Activated CD4-positive, alpha-beta T cell treated with anti-CD3 and anti-CD28 coated beads, Interleukin-2, amount 10 ng/mL, durations not matched to agents 24 days and 14 days (primary cell): ENCODE measurements at regions of chr11 and their contacts with region 1.

Region 1: DNA sequence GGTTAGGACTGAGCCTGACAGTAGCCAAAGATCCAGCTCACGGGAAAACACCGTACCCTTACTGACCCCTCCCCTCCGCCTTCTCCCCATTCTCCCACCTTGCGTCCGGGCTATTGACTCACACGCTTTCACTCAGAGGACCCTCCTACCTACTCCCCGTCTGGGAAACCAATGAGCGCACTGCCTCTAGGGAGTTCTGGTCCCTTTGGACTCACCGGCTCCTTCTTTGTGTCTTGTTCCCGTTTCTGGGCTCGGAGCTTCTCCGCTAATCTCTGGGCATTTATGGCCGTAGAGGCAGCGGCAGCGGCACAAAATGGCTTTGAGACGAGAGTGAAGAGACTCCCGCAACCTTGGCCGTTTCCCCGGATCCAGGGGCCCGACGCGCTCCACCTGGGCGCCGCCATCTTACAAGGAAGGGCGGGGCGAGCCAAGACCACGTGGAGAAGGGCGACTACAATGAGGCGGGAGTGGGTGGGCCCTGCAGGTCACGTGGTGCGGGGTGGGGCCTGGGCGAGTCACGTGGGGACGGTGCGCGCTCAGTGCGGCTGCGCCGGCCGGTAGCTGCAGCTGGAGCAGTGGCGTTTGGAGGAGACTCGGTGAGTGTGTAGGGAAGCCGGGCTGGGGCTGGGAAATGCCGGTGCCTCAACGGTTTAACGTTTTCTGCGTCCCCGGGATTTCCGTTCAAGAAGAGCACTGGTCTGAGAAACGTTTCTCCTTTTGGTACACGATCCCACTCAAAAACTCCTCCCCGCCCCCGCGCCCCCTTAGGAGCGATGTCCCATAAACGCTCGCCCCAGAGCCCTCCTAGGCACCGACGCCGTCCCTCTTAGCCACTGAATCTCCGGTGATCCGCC is at the starts of genes FAM118B and RPUSD4:
- DNase-seq: peak; percentile 100
- H3K4me3 Mint-ChIP-seq: peak within 1 kb of the TSS; percentile 100
- H3K27ac Mint-ChIP-seq: peak within 1 kb of the TSS; percentile 97
- H3K4me1 Mint-ChIP-seq: peaks cover 32% of the 10 kb centered on the region
- H3K27me3 Mint-ChIP-seq: peaks cover 7% of the 10 kb centered on the region
- total RNA-seq, gene FAM118B: 12.8 and 14.2 TPM in 2 replicates
- total RNA-seq, gene RPUSD4: 48.6 and 51.1 TPM in 2 replicates

Region 2: DNA sequence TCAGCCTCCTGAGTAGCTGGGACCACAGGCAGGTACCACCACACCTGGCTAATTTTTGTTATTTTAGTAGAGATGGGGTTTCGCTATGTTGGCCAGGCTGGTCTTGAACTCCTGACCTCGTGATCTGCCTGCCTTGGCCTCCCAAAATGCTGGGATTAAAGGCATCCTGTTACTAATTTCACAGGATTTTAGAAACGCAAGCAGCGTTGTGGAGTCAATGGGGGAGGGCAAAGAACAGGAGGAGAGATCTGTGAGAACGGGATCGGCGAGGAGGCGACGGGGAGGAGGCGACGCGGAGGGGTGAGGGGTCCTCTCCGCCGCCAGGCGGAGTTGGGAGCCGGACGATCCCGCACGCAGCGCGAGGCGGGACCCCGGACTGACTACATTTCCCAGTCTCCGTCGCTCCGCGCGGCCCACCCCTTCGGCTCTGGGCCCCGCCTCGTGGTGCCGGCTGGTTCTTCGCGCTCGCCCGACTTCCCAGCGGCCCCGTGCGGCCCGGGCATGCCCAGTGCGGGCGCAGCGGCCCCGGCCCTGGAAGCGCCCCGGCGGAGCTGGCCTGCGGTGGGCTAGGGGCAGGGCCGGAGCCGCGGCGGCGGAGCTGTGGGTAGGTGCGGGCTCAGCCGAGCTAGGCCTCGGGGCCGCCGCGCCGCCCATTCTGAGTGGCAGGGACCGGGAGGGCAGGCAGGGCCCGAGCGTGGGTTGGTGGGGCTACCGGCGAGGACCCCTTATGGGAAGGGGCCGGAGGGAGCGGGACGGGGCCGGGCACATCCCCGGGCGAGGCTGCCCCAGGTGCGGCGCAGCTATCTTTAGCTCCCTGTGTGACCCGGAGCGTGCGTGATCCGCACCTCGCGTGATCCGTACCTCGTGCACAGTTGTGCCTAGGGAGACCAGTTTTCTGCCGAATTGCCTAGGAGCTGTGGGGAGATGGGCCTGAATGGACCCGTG is 642.2 kb before region 1 on chr11 and contains the start of gene EI24:
- intact Hi-C with region 1: loop called (anchors 5 kb)
- DNase-seq: peak; percentile 97
- H3K4me3 Mint-ChIP-seq: peak within 1 kb of the TSS; percentile 96
- H3K27ac Mint-ChIP-seq: peak within 1 kb of the TSS; percentile 94
- H3K4me1 Mint-ChIP-seq: peaks cover 18% of the 10 kb centered on the region
- H3K27me3 Mint-ChIP-seq: no peaks in the 10 kb centered on the region
- total RNA-seq, gene EI24: 61.7 TPM in 2 replicates

Region 3: GRCh38 chr11:125592305-125593112 is 619.0 kb before region 1 on chr11 and contains the start of gene STT3A:
- intact Hi-C with region 1: loop called (anchors 1 kb)
- DNase-seq: peak; percentile 99
- H3K4me3 Mint-ChIP-seq: peak within 1 kb of the TSS; percentile 98
- H3K27ac Mint-ChIP-seq: peak within 1 kb of the TSS; percentile 95
- H3K4me1 Mint-ChIP-seq: peaks cover 37% of the 10 kb centered on the region
- H3K27me3 Mint-ChIP-seq: no peaks in the 10 kb centered on the region
- total RNA-seq, gene STT3A: 167 and 183 TPM in 2 replicates

Region 4: DNA sequence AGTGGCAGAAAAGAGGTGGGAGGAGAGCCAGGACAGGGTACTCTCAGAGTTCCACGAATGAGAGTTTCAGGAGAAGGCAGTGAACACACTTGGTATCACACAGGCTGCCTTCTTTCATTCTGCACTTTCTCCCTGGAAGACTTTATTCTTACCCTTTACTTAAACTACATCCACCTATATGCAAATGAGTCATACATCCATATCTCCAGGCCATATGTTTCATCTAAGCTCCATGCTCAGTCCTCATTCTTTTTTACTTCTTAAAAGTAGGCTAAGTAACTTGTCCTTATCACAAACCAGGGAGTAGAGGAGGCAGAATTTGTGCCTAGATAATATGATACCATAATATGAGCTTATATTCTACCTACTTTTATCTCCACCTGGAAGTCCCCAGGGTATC is 330.2 kb before region 1 on chr11:
- intact Hi-C with region 1: no loop called
- DNase-seq: no peak
- H3K4me3 Mint-ChIP-seq: no peak overlapping the region
- H3K27ac Mint-ChIP-seq: no peak overlapping the region
- H3K4me1 Mint-ChIP-seq: peaks cover 4% of the 10 kb centered on the region
- H3K27me3 Mint-ChIP-seq: peaks cover 27% of the 10 kb centered on the region

Region 5: DNA sequence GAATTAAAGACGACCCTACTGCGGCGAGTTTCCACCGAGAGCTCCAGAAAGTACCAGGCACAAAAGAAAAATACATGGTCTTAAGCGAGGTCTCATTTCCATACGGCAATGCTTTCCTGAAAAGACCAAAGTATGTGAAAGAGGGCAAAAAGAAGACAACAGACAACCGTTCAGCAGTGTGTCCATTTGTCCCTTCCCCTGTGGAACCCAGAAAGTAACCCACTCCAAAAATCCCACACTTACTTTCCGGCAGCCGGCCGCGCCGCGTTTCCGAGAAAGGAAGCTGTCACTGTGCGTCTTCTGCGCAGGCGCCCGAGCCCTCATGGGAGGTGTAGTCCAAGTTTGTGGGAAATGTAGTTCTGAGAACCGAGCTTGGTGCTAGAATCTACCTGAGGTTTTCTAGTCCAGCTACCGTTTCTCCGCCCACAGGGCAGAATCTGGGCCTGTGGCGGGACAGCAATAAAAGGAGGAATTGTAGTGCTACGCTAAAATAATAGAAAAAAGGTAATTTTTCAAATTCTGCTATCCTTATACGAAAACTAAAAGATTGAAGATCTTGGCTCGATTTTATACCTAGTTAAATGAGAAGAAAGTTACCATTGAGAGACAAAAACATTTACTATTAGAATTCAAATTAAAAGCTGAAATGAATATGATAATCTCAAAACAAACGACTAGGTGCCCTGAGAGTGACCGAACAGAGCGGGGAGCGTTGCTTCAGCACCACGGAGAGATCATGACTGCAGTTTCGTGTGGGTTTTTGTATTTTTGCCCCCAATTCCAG is 308.3 kb before region 1 on chr11 and contains the start of gene PUS3:
- intact Hi-C with region 1: loop called (anchors 1 kb)
- DNase-seq: peak; percentile 97
- H3K4me3 Mint-ChIP-seq: peak within 1 kb of the TSS; percentile 95
- H3K27ac Mint-ChIP-seq: peak within 1 kb of the TSS; percentile 94
- H3K4me1 Mint-ChIP-seq: peaks cover 28% of the 10 kb centered on the region
- H3K27me3 Mint-ChIP-seq: peaks cover 29% of the 10 kb centered on the region
- total RNA-seq, gene PUS3: 18.0 and 19.2 TPM in 2 replicates

Region 6: DNA sequence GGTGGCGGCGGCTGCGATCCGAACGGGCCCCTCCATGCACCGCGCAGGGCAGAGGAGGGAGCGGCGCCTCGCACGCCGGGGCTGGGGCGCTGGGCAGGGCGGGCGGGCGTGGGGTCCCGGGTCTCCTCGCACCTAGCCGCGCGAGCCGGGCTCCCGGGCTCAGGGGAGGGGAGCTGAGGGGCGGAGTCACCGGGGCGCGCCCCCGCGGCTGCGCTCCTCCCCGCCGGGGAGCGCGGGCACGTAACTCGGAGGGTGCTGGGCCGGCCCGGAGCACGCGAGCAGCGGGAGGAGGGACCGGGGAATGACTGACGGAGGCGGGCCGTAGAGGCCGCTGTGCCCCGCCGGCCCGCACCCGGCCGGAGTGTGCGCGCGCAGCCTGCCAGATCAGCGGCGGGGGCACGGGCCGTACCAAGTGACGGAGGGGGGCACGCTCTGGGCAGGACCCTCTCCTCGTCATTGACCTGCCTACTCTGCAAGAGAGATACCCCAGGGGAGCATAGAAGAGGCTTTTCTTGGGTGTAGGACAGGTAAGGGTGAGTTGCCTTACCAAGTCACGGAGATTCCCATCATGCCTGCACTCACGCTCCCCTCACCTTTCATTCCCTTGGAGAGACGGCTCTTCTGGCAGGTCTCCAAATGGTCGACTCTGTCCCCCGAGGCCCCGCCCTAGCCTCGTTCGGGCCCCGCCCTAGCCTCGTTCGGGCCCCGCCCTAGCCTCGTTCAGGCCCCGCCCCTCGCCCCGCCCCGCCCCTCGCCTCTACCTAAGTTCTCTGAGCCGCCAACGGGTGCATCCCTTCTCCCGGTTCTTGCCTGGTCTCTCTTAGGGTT is 148.6 kb before region 1 on chr11 and contains the start of gene CDON:
- intact Hi-C with region 1: loop called (anchors 1 kb)
- DNase-seq: peak; percentile 98
- H3K4me3 Mint-ChIP-seq: peak within 1 kb of the TSS; percentile 80
- H3K27ac Mint-ChIP-seq: peak within 1 kb of the TSS; percentile 97
- H3K4me1 Mint-ChIP-seq: peaks cover 5% of the 10 kb centered on the region
- H3K27me3 Mint-ChIP-seq: peaks cover 46% of the 10 kb centered on the region
- total RNA-seq, gene CDON: 1.9 TPM in 2 replicates

Region 7: GRCh38 chr11:126303623-126304456 is 92.4 kb after region 1 on chr11 and contains the start of gene DCPS:
- intact Hi-C with region 1: loop called (anchors 1 kb)
- DNase-seq: peak; percentile 97
- H3K4me3 Mint-ChIP-seq: peak within 1 kb of the TSS; percentile 91
- H3K27ac Mint-ChIP-seq: peak within 1 kb of the TSS; percentile 97
- H3K4me1 Mint-ChIP-seq: peaks cover 19% of the 10 kb centered on the region
- H3K27me3 Mint-ChIP-seq: no peaks in the 10 kb centered on the region
- total RNA-seq, gene DCPS: 36.0 and 40.2 TPM in 2 replicates

Region 8: GRCh38 chr11:126355324-126355925 is 144.0 kb after region 1 on chr11 and contains the start of gene ST3GAL4:
- intact Hi-C with region 1: loop called (anchors 2 kb)
- DNase-seq: peak; percentile 91
- H3K4me3 Mint-ChIP-seq: peak within 1 kb of the TSS; percentile 96
- H3K27ac Mint-ChIP-seq: peak within 1 kb of the TSS; percentile 93
- H3K4me1 Mint-ChIP-seq: peaks cover 35% of the 10 kb centered on the region
- H3K27me3 Mint-ChIP-seq: no peaks in the 10 kb centered on the region
- total RNA-seq, gene ST3GAL4: 12.3 and 13.3 TPM in 2 replicates